ENCODE measurements at regions of chr7 and their contacts with region 1.

Region 1: DNA sequence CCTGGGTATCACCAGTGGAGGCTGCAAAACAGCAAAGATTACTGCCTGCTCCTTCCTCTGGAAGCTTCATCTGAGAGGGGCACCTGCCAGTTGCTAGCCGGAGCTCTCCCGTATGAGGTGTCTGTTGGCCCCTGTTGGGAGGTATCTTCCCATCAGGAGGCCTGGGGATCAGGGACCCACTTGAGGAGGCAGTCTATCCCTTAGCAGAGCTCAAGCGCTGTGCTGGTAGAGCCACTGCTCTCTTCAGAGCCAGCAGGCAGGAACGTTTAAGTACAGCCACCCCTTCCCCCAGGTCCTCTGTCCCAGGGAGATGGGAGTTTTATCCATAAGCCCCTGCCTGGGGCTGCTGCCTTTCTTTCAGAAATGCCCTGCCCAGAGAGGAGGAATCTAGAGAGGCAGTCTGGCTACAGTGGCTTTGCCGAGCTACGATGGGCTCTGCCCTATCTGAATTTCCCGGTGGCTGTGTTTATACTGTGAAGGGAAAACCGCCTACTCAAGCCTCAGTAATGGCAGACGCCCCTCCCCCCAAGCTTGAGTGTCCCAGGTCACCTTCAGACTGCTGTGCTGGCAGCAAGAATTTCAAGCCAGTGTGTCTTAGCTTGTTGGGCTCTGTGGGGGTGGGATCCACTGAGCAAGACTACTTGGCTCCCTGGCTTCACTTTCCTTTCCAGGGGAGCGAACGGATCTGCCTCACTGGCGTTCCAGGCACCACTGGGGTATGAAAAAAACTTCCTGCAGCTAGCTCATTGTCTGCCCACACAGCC is 19.6 kb downstream of the SEMA3E start:
- DNase-seq: no peak
- ATAC-seq: no peak
- H3K4me3 Mint-ChIP-seq: no peak overlapping the region
- H3K27ac Mint-ChIP-seq: no peak overlapping the region
- H3K4me1 Mint-ChIP-seq: no peaks in the 10 kb centered on the region
- H3K27me3 Mint-ChIP-seq: no peaks in the 10 kb centered on the region
- CTCF ChIP-seq: no peak

Region 2: GRCh38 chr7:83559887-83560286 is 69.4 kb before region 1 on chr7:
- CTCF ChIA-PET with region 1: no interaction called
- POLR2A ChIA-PET with region 1: no interaction called
- intact Hi-C with region 1: loop called (anchors 10 kb)
- DNase-seq: no peak
- ATAC-seq: no peak
- H3K4me3 Mint-ChIP-seq: no peak overlapping the region
- H3K27ac Mint-ChIP-seq: no peak overlapping the region
- H3K4me1 Mint-ChIP-seq: no peaks in the 10 kb centered on the region
- H3K27me3 Mint-ChIP-seq: no peaks in the 10 kb centered on the region
- CTCF ChIP-seq: no peak

Region 3: DNA sequence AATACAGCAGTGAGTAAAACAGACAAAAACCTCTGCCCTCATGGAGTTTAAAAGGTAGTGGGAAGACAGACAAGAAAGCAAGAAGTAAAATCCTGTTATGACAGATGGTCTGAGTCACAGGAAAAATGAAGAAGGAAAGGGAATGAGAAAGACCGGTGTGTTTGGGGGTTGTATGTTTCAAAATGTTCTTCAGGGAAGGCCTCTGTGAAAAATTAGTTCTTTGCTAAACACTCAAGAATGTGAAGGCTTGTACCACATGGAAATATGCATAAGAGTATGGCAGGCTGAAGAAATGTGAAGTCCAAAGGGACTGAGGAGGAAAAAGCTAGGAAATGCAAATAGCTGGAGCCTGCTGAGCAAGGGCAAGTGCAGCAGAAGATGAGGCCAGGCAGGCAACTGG is 881.2 kb after region 1 on chr7:
- CTCF ChIA-PET with region 1: no interaction called
- POLR2A ChIA-PET with region 1: no interaction called
- intact Hi-C with region 1: no loop called
- DNase-seq: no peak
- ATAC-seq: no peak
- H3K4me3 Mint-ChIP-seq: no peak overlapping the region
- H3K27ac Mint-ChIP-seq: no peak overlapping the region
- H3K4me1 Mint-ChIP-seq: no peaks in the 10 kb centered on the region
- H3K27me3 Mint-ChIP-seq: no peaks in the 10 kb centered on the region
- CTCF ChIP-seq: no peak

Measured in activated B cell treated with CpG ODN at 0.5 μM for 24 hours (primary cell).